CD8-positive, alpha-beta T cell (primary cell): ENCODE measurements at regions of chr10 and their contacts with region 1.

Region 1: GRCh38 chr10:124741281-124741921 is 2.8 kb downstream of the FAM53B start:
- DNase-seq: peak; percentile 64 to 88 (median 80)
- ATAC-seq: peak; percentile 55
- H3K4me3 ChIP-seq: peak overlapping the region; percentile 10 to 75
- H3K4me3 Mint-ChIP-seq: peak overlapping the region; percentile 97
- H3K27ac ChIP-seq: peak overlapping the region in 1 of 2 experiments; percentile 73
- H3K27ac Mint-ChIP-seq: peak overlapping the region; percentile 93
- H3K4me1 ChIP-seq: peaks cover 67% of the 10 kb centered on the region
- H3K4me1 Mint-ChIP-seq: peaks cover 75% of the 10 kb centered on the region
- H3K27me3 ChIP-seq: no peaks in the 10 kb centered on the region
- H3K27me3 Mint-ChIP-seq: no peaks in the 10 kb centered on the region
- CTCF ChIP-seq: peak; percentile 94

Region 2: DNA sequence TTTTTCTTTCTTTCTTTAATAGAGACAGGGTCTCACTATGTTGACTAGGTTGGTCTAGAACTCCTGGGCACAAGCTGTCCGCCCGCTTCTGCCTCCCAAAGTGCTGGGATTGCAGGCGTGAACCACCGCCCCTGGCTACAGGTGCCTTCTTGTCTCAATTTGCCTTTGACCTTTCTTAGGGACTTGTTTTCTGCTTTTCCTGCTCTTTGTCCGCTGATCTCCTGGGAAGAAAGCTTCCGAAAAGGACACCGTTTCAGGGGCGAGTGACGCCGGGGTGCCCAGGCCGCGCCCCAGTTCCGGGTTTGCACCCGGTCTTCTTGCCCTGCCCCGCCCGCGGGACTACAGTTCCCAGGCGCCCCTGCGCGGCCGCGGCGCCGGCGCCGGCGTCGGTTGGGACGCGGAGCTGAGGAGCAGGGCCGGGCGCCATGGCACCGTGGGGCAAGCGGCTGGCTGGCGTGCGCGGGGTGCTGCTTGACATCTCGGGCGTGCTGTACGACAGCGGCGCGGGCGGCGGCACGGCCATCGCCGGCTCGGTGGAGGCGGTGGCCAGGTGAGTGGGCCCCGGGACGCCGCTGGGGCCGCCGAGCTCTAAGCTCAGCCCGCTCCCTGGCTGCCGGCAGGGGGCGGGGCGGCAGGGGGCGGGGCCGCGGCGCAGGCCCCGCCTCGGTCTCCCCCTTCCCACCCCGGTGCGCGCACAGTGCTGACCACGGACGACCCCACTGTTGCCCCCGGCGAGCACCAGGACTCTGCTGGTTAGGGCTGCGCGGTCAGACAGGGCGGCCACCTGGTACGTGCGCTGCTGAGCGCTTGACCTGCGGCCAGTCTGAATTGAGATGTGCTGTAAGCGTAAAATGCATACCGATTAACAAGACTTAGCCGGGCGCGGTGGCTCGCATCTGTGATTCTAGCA is 279.7 kb before region 1 on chr10 and contains the start of gene LHPP:
- CTCF ChIA-PET with region 1: no interaction called
- POLR2A ChIA-PET with region 1: no interaction called
- intact Hi-C with region 1: loop called (anchors 1 to 5 kb)
- DNase-seq: peak; percentile 72 to 93 (median 86)
- ATAC-seq: peak; percentile 94
- H3K4me3 ChIP-seq: peak within 1 kb of the TSS; percentile 61 to 90
- H3K4me3 Mint-ChIP-seq: peak within 1 kb of the TSS; percentile 91
- H3K27ac ChIP-seq: peak within 1 kb of the TSS; percentile 37 to 79
- H3K27ac Mint-ChIP-seq: peak within 1 kb of the TSS; percentile 95
- H3K4me1 ChIP-seq: peaks cover 25% of the 10 kb centered on the region
- H3K4me1 Mint-ChIP-seq: peaks cover 32% of the 10 kb centered on the region
- H3K27me3 ChIP-seq: peaks cover 0 to under 1% of the 10 kb centered on the region in 2 experiments
- H3K27me3 Mint-ChIP-seq: peaks cover 4% of the 10 kb centered on the region
- CTCF ChIP-seq: peak; percentile 39
- total RNA-seq, gene LHPP: 14.4 to 17.3 TPM

Region 3: GRCh38 chr10:124619195-124619594 is 122.2 kb before region 1 on chr10:
- CTCF ChIA-PET with region 1: interaction called, 26 read pairs
- POLR2A ChIA-PET with region 1: no interaction called
- intact Hi-C with region 1: loop called in 1 of 2 experiments (anchors 5 kb)
- DNase-seq: peak in 5 of 9 experiments; percentile 25 to 78 (median 49)
- ATAC-seq: peak; percentile 76
- H3K4me3 ChIP-seq: no peak overlapping the region
- H3K4me3 Mint-ChIP-seq: peak overlapping the region; percentile 59
- H3K27ac ChIP-seq: peak overlapping the region in 1 of 2 experiments; percentile 66
- H3K27ac Mint-ChIP-seq: peak overlapping the region; percentile 87
- H3K4me1 ChIP-seq: peaks cover 37% of the 10 kb centered on the region
- H3K4me1 Mint-ChIP-seq: peaks cover 38% of the 10 kb centered on the region
- H3K27me3 ChIP-seq: no peaks in the 10 kb centered on the region
- H3K27me3 Mint-ChIP-seq: no peaks in the 10 kb centered on the region
- CTCF ChIP-seq: no peak

Region 4: GRCh38 chr10:124657806-124658205 is 83.6 kb before region 1 on chr10:
- CTCF ChIA-PET with region 1: interaction called, 20 read pairs
- POLR2A ChIA-PET with region 1: interaction called, 4 read pairs
- intact Hi-C with region 1: no loop called
- DNase-seq: peak in 6 of 9 experiments; percentile 28 to 87 (median 52)
- ATAC-seq: peak; percentile 56
- H3K4me3 ChIP-seq: no peak overlapping the region
- H3K4me3 Mint-ChIP-seq: peak overlapping the region; percentile 54
- H3K27ac ChIP-seq: peak overlapping the region; percentile 46 to 91
- H3K27ac Mint-ChIP-seq: peak overlapping the region; percentile 85
- H3K4me1 ChIP-seq: peaks cover 70% of the 10 kb centered on the region
- H3K4me1 Mint-ChIP-seq: peaks cover 78% of the 10 kb centered on the region
- H3K27me3 ChIP-seq: no peaks in the 10 kb centered on the region
- H3K27me3 Mint-ChIP-seq: no peaks in the 10 kb centered on the region
- CTCF ChIP-seq: no peak

Region 5: GRCh38 chr10:124703778-124704427 is 37.5 kb before region 1 on chr10:
- CTCF ChIA-PET with region 1: interaction called, 29 read pairs
- POLR2A ChIA-PET with region 1: interaction called, 6 read pairs
- intact Hi-C with region 1: loop called (anchors 1 to 5 kb)
- DNase-seq: no peak
- ATAC-seq: no peak
- H3K4me3 ChIP-seq: no peak overlapping the region
- H3K4me3 Mint-ChIP-seq: peak overlapping the region; percentile 23
- H3K27ac ChIP-seq: peak overlapping the region in 1 of 2 experiments; percentile 72
- H3K27ac Mint-ChIP-seq: peak overlapping the region; percentile 97
- H3K4me1 ChIP-seq: peaks cover 83% of the 10 kb centered on the region
- H3K4me1 Mint-ChIP-seq: peaks cover 92% of the 10 kb centered on the region
- H3K27me3 ChIP-seq: no peaks in the 10 kb centered on the region
- H3K27me3 Mint-ChIP-seq: no peaks in the 10 kb centered on the region
- CTCF ChIP-seq: no peak

Region 6: DNA sequence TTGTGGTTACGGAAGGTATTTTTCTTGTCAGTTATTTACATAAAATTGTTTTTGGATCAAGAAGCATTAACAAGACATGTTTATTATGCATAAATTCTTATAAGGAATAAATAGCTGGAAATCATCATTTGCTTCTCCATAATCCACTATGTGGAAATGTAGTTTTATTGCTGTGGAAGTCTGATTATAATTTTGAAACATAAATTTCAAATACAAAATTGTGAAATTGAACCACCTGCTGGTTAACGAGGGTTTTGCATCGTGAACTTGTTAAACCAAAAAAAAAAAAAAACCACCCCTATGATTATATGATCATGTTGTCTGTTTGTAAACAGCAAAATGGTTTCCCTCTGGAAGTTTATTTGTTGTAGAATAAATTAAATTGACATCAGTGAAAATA is 86.1 kb after region 1 on chr10:
- CTCF ChIA-PET with region 1: interaction called, 9 read pairs
- POLR2A ChIA-PET with region 1: no interaction called
- intact Hi-C with region 1: loop called in 1 of 2 experiments (anchors 5 kb)
- DNase-seq: peak in 2 of 9 experiments; percentile 41 to 50
- ATAC-seq: no peak
- H3K4me3 ChIP-seq: no peak overlapping the region
- H3K4me3 Mint-ChIP-seq: no peak overlapping the region
- H3K27ac ChIP-seq: no peak overlapping the region
- H3K27ac Mint-ChIP-seq: no peak overlapping the region
- H3K4me1 ChIP-seq: no peaks in the 10 kb centered on the region
- H3K4me1 Mint-ChIP-seq: no peaks in the 10 kb centered on the region
- H3K27me3 ChIP-seq: no peaks in the 10 kb centered on the region
- H3K27me3 Mint-ChIP-seq: no peaks in the 10 kb centered on the region
- CTCF ChIP-seq: peak; percentile 68

Region 7: GRCh38 chr10:125123476-125124114 is 382.2 kb after region 1 on chr10:
- CTCF ChIA-PET with region 1: no interaction called
- POLR2A ChIA-PET with region 1: no interaction called
- intact Hi-C with region 1: no loop called
- DNase-seq: no peak
- ATAC-seq: no peak
- H3K4me3 ChIP-seq: no peak overlapping the region
- H3K4me3 Mint-ChIP-seq: no peak overlapping the region
- H3K27ac ChIP-seq: no peak overlapping the region
- H3K27ac Mint-ChIP-seq: no peak overlapping the region
- H3K4me1 ChIP-seq: no peaks in the 10 kb centered on the region
- H3K4me1 Mint-ChIP-seq: no peaks in the 10 kb centered on the region
- H3K27me3 ChIP-seq: no peaks in the 10 kb centered on the region
- H3K27me3 Mint-ChIP-seq: peaks cover 4% of the 10 kb centered on the region
- CTCF ChIP-seq: no peak

Region 8: GRCh38 chr10:126135204-126135603 is 1393.8 kb after region 1 on chr10:
- CTCF ChIA-PET with region 1: no interaction called
- POLR2A ChIA-PET with region 1: no interaction called
- intact Hi-C with region 1: no loop called
- DNase-seq: no peak
- ATAC-seq: no peak
- H3K4me3 ChIP-seq: no peak overlapping the region
- H3K4me3 Mint-ChIP-seq: no peak overlapping the region
- H3K27ac ChIP-seq: no peak overlapping the region
- H3K27ac Mint-ChIP-seq: no peak overlapping the region
- H3K4me1 ChIP-seq: no peaks in the 10 kb centered on the region
- H3K4me1 Mint-ChIP-seq: no peaks in the 10 kb centered on the region
- H3K27me3 ChIP-seq: no peaks in the 10 kb centered on the region
- H3K27me3 Mint-ChIP-seq: no peaks in the 10 kb centered on the region
- CTCF ChIP-seq: no peak